Activated naive CD4-positive, alpha-beta T cell treated with anti-CD3 and anti-CD28 coated beads for 36 hours (primary cell): ENCODE measurements at regions of chr3 and their contacts with region 1.

Region 1: DNA sequence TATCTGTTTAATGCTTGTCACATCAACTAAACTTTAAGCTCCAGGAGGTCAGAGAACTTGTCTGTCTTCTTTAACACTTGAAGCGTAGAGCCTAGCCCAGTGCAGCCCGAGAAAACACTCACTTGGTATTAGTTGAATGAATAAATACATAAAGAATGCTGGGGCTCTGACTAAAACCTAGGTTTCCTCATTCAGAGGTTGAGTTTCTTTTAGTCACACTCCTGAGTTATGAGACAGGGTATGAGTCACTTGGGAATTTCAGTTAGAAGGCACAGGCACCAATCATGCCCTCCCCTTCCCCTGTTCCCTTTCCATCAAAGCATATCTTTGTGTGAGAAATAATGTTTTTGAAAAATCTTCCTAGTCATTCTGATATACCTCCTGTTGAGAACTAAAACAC is 589.8 kb upstream of the DPPA4 start:
- DNase-seq: peak; percentile 58
- H3K4me3 Mint-ChIP-seq: no peak overlapping the region
- H3K27ac Mint-ChIP-seq: no peak overlapping the region
- H3K4me1 Mint-ChIP-seq: peaks cover 12% of the 10 kb centered on the region
- H3K27me3 Mint-ChIP-seq: peaks cover 2% of the 10 kb centered on the region

Region 2: DNA sequence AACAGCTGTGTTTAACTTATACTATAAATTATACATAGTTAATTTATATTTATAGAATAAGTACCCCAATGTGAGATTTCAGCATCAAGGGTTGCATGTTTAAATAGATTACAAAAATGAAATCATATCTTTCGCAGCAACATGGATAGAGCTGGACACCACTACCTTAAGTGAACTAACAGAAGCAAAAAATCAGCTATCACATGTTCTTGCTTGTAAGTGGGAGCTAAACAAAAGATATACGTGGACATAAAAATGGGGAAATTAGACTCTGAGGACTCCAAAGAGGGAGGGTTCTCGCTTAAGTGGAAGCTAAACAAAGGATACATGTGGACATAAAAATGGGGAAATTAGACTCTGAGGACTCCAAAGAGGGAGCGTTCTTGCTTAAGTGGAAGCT is 36.7 kb after region 1 on chr3:
- CTCF ChIA-PET with region 1: no interaction called
- intact Hi-C with region 1: no loop called
- DNase-seq: no peak
- H3K4me3 Mint-ChIP-seq: no peak overlapping the region
- H3K27ac Mint-ChIP-seq: no peak overlapping the region
- H3K4me1 Mint-ChIP-seq: no peaks in the 10 kb centered on the region
- H3K27me3 Mint-ChIP-seq: no peaks in the 10 kb centered on the region

Region 3: DNA sequence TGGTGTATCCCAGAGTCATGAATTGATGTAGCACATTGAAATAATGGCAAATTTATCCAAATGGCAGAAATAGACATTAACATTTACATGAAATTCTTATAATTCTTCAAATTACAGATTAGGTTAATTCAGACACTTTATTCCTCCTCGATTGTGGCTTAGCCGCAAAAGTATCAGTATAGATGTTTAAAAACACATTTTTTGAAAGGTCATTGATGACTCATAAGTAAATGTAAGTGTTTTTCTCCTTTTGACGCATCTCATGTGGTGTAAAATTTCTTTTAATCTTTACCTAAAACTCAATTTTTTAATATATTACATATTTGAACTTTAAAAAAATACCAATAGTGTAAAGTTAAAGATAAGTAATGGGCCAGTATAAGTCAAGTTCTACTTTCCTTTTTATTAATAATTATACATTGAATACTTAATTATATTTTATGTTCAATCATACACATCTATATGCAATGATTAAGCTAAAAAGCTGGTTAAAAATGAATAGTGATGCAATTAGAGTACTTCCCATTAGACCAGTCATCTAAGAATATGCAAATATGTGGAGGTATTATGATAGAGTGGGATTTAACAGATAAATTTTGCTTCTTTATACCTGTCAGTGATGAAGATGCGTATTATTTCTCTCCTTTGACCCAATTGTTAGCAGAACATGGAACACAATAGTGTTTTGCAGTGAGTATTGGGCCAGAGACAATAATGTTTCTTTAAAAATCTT is 88.2 kb after region 1 on chr3:
- CTCF ChIA-PET with region 1: no interaction called
- intact Hi-C with region 1: loop called (anchors 1 kb)
- DNase-seq: no peak
- H3K4me3 Mint-ChIP-seq: no peak overlapping the region
- H3K27ac Mint-ChIP-seq: no peak overlapping the region
- H3K4me1 Mint-ChIP-seq: peaks cover 2% of the 10 kb centered on the region
- H3K27me3 Mint-ChIP-seq: no peaks in the 10 kb centered on the region

Region 4: DNA sequence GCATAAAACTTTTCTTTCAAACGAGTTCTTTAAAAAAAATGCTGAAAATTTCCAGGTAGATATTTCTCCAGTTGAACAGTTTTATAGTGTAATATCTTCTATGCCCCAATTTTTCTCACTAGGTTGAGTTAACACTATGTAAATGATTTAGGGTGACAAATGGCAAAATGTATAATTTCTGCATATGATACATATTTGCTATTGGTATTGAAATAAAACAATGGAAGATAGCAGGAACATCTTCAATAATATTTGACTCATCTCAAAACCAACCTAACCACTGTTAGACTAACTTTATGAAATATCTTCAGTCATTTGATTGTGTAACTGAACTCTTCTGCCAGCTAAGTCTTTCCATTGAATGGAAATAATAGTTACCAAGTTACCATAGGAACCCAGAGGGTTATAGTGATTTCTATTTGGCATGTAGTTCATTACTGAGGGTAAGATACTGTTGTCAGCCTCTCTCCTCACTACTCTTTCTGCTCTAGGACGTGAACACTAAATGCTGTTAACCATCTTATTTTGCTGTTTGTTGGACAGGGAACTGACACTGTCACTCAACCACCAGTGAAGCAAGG is 319.7 kb after region 1 on chr3:
- CTCF ChIA-PET with region 1: no interaction called
- intact Hi-C with region 1: loop called (anchors 1 kb)
- DNase-seq: no peak
- H3K4me3 Mint-ChIP-seq: no peak overlapping the region
- H3K27ac Mint-ChIP-seq: no peak overlapping the region
- H3K4me1 Mint-ChIP-seq: peaks cover 7% of the 10 kb centered on the region
- H3K27me3 Mint-ChIP-seq: no peaks in the 10 kb centered on the region

Region 5: GRCh38 chr3:111071257-111072015 is 1144.3 kb after region 1 on chr3 and contains the start of gene NECTIN3:
- CTCF ChIA-PET with region 1: no interaction called
- intact Hi-C with region 1: loop called (anchors 5 kb)
- DNase-seq: peak; percentile 91
- H3K4me3 Mint-ChIP-seq: peak within 1 kb of the TSS; percentile 85
- H3K27ac Mint-ChIP-seq: peak within 1 kb of the TSS; percentile 27
- H3K4me1 Mint-ChIP-seq: peaks cover 24% of the 10 kb centered on the region
- H3K27me3 Mint-ChIP-seq: peaks cover 40% of the 10 kb centered on the region
- total RNA-seq, gene NECTIN3: 3.0 to 3.5 TPM